B cell (primary cell): ENCODE measurements at regions of chr7 and their contacts with region 1.

Region 1: DNA sequence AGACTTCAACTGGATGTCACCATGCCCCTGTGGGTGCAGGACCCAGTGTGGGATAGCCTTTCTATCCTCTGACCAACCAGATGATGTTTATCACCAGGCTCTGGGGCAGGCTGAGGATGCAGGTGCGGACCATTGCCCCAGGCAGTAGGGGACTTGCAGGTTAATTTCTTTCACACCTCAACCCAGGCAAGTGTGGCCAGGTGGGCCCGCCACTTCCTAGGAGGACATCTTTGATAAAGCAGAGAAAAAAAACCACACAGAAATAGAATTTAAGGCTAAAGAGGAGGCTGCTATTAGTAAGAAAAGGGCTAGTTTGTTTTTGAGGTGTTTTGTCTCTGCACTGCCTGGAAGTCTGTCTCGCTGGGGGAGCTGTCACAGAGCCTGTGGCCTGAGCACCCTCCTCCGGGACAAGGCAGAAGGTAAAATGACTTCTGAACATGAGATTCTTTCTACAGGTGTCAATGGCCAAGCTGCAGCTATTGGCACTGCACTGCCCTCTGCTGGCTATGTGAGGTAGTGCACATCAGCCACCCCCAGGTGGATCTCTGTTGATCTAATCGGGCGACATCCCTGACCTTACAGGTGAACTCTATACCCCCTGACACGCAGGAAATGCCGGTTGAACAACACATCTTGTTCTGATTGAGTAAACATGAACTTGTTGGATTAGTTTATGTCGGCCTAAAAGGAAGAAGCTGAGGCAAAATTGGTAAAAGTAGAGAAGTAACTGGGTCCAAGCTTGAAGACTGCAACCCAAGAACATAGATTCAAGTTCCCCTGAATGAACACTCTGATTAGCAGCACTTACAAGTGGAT is 21.0 kb downstream of the UPP1 start:
- DNase-seq: peak; percentile 85
- ATAC-seq: peak; percentile 96
- H3K4me3 ChIP-seq: no peak overlapping the region
- H3K4me3 Mint-ChIP-seq: no peak overlapping the region
- H3K27ac ChIP-seq: no peak overlapping the region
- H3K27ac Mint-ChIP-seq: no peak overlapping the region
- H3K4me1 ChIP-seq: peaks cover 0 to 3% of the 10 kb centered on the region in 2 donors
- H3K4me1 Mint-ChIP-seq: peaks cover 4% of the 10 kb centered on the region
- H3K27me3 ChIP-seq: no peaks in the 10 kb centered on the region
- H3K27me3 Mint-ChIP-seq: peaks cover 3% of the 10 kb centered on the region
- CTCF ChIP-seq: peak; percentile 97

Region 2: DNA sequence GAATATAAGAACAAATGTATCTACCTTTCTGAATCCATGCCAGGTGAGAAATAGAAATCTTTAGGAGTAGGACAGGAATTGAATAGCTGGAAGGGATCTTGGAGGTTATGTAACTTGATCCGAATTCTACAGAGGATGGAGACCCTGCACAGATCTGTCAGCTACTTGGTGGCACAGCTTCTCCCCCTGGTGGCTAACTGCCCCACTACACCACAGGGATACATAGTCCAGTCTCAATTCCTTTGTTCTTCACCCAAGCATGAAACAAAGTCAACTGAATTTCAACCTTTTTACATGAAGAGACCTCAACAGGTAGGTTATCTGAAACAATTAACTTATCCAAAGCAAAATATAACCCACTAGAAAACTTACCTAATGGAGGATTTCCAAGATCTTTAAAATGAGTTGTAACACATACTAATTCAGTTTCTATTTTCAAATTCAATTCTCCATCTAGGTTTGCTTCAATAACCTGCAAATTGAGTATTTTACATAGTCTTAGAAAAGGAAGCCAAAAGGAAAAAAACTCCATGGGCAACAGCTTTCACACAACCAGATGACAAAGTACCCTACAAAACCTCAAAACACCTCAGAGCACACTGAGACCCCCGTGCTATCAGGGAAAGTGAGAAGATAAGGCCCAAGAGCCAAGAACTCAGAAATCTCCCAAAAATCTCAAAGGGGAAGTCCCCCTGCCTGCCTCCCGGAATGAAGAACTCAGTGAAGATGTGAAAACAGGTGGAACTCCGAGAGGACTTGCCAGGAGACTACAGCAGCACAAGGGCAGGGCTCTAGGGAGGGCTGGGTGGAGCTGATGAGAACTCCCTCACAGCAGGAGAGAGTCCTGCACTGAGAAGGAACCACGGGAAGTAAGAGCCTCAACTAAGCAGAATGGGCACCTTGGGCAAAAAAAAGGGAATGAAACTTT is 140.9 kb before region 1 on chr7:
- CTCF ChIA-PET with region 1: interaction called, 10 read pairs
- POLR2A ChIA-PET with region 1: no interaction called
- intact Hi-C with region 1: no loop called
- DNase-seq: peak; percentile 62
- ATAC-seq: peak; percentile 71
- H3K4me3 ChIP-seq: no peak overlapping the region
- H3K4me3 Mint-ChIP-seq: no peak overlapping the region
- H3K27ac ChIP-seq: no peak overlapping the region
- H3K27ac Mint-ChIP-seq: no peak overlapping the region
- H3K4me1 ChIP-seq: peaks cover 0 to 4% of the 10 kb centered on the region in 2 donors
- H3K4me1 Mint-ChIP-seq: peaks cover 8% of the 10 kb centered on the region
- H3K27me3 ChIP-seq: no peaks in the 10 kb centered on the region
- H3K27me3 Mint-ChIP-seq: no peaks in the 10 kb centered on the region
- CTCF ChIP-seq: peak; percentile 91

Region 3: DNA sequence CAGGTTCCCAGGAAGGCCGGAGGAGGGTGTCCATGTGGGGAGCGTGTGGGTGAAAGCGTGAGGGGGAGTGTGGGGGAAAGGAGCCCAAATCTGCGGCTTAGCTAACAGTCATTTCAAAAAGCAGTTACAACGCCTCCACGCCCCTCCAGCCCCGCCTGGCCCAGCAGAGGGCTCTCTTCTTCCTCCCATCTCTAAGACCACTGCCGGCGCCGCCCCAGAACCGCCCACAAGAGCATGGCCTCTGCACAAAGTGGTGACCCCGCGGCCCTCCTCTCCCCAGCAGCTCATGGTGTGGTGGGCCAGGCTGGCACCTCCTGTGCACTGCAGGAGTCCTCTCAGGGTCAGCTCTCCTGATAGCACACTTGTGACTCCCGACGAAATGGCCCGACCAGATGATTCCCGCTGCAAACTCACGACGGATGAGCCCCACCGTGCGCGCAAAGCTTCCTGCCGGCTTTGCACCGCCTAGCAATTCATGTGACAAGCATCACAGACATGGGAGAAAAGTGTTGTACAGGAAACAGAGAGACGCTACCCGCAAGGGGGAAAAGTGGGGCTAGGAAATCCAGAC is 118.2 kb before region 1 on chr7:
- CTCF ChIA-PET with region 1: interaction called, 229 read pairs
- POLR2A ChIA-PET with region 1: interaction called, 5 read pairs
- intact Hi-C with region 1: loop called (anchors 1 kb)
- DNase-seq: peak; percentile 89
- ATAC-seq: peak; percentile 99
- H3K4me3 ChIP-seq: peak overlapping the region; percentile 39 to 86 (median 69)
- H3K4me3 Mint-ChIP-seq: peak overlapping the region; percentile 96
- H3K27ac ChIP-seq: peak overlapping the region; percentile 60 to 82
- H3K27ac Mint-ChIP-seq: peak overlapping the region; percentile 88
- H3K4me1 ChIP-seq: peaks cover 9 to 12% of the 10 kb centered on the region in 2 donors
- H3K4me1 Mint-ChIP-seq: peaks cover 12% of the 10 kb centered on the region
- H3K27me3 ChIP-seq: no peaks in the 10 kb centered on the region
- H3K27me3 Mint-ChIP-seq: no peaks in the 10 kb centered on the region
- CTCF ChIP-seq: peak; percentile 71

Region 4: GRCh38 chr7:48035301-48035966 is 74.6 kb before region 1 on chr7 and contains the start of gene C7orf57:
- CTCF ChIA-PET with region 1: interaction called, 4 read pairs
- POLR2A ChIA-PET with region 1: no interaction called
- intact Hi-C with region 1: loop called (anchors 2 kb)
- DNase-seq: peak; percentile 81
- ATAC-seq: peak; percentile 96
- H3K4me3 ChIP-seq: peak within 1 kb of the TSS; percentile 33 to 61 (median 44)
- H3K4me3 Mint-ChIP-seq: peak within 1 kb of the TSS; percentile 89
- H3K27ac ChIP-seq: no peak within 1 kb of the TSS
- H3K27ac Mint-ChIP-seq: peak within 1 kb of the TSS; percentile 8
- H3K4me1 ChIP-seq: peaks cover 14 to 15% of the 10 kb centered on the region in 2 donors
- H3K4me1 Mint-ChIP-seq: peaks cover 17% of the 10 kb centered on the region
- H3K27me3 ChIP-seq: peaks cover 0 to 40% (median 23%) of the 10 kb centered on the region in 4 experiments
- H3K27me3 Mint-ChIP-seq: peaks cover 38% of the 10 kb centered on the region
- CTCF ChIP-seq: no peak
- total RNA-seq, gene C7orf57: not detected in 2 replicates